Activated CD8-positive, alpha-beta T cell treated with anti-CD3 and anti-CD28 coated beads for 36 hours (primary cell): ENCODE measurements at regions of chr13 and their contacts with region 1.

Region 1: GRCh38 chr13:104757712-104758111 is 1691.5 kb upstream of the SLC10A2 start:
- DNase-seq: no peak
- ATAC-seq: no peak
- H3K4me3 Mint-ChIP-seq: no peak overlapping the region
- H3K27ac Mint-ChIP-seq: no peak overlapping the region
- H3K4me1 Mint-ChIP-seq: no peaks in the 10 kb centered on the region
- H3K27me3 Mint-ChIP-seq: no peaks in the 10 kb centered on the region
- CTCF ChIP-seq: no peak

Region 2: GRCh38 chr13:104737713-104738112 is 20.0 kb before region 1 on chr13:
- CTCF ChIA-PET with region 1: no interaction called
- POLR2A ChIA-PET with region 1: no interaction called
- intact Hi-C with region 1: no loop called
- DNase-seq: no peak
- ATAC-seq: no peak
- H3K4me3 Mint-ChIP-seq: no peak overlapping the region
- H3K27ac Mint-ChIP-seq: no peak overlapping the region
- H3K4me1 Mint-ChIP-seq: no peaks in the 10 kb centered on the region
- H3K27me3 Mint-ChIP-seq: no peaks in the 10 kb centered on the region
- CTCF ChIP-seq: no peak

Region 3: GRCh38 chr13:104773775-104774174 is 16.1 kb after region 1 on chr13:
- CTCF ChIA-PET with region 1: interaction called, 12 read pairs
- POLR2A ChIA-PET with region 1: no interaction called
- intact Hi-C with region 1: no loop called
- DNase-seq: no peak
- ATAC-seq: peak; percentile 68
- H3K4me3 Mint-ChIP-seq: no peak overlapping the region
- H3K27ac Mint-ChIP-seq: no peak overlapping the region
- H3K4me1 Mint-ChIP-seq: peaks cover 10% of the 10 kb centered on the region
- H3K27me3 Mint-ChIP-seq: no peaks in the 10 kb centered on the region
- CTCF ChIP-seq: peak; percentile 66